Heart right ventricle (tissue), 16 donors: ENCODE measurements at regions of chr7 and their contacts with region 1.

Region 1: DNA sequence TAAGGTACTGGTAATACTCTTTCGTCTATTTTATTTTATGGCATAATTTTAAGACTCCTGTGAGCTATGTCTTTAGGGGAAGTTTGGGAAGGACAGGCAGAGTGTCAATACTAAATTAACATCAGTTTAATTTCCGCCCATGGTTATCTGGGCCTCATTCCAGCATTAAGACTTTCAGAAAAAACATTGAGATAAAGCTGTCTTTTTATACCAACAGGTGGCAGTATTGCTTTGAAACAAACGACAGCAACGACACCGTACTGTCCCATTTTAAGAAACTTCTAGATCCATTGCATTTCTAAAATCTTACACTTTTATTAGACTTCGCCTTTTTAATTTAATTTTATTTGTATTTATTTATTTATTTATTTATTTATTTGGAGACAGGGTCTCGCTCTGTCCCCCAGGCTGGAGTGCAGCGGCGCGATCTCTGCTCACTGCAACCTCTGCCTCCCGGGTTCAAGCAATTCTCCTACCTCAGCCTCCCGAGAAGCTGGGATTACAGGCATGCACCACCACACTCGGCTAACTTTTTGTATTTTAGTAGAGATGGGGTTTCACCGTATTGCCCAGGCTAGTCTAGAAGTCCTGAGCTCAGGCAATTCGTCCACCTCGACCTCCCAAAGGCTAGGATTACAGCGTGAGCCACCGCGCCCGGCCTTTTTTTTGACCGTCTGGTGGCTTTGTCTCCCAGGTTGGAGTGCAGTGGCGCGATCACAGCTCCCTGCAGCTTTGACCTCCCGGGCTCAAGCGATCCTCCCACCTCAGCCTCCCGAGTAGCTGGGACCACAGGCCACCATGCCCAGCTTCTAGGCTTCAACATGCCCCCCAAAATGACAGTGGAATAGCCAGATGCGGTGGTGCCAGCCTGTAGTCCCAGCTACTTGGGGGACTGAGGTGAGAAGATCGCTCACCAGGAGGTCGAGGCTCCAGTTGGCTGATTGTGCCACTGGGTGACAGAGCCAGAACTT is 78.7 kb upstream of the C1GALT1 start:
- DNase-seq: peak in 1 of 2 donors; percentile 6
- ATAC-seq: peak in 6 of 8 donors; percentile 43 to 79 (median 63)
- H3K4me3 ChIP-seq: peak overlapping the region in 3 of 10 donors; percentile 12 to 30 (median 18)
- H3K27ac ChIP-seq: no peak overlapping the region
- H3K4me1 ChIP-seq: peaks cover 0 to 29% (median 15%) of the 10 kb centered on the region in 9 donors
- H3K27me3 ChIP-seq: no peaks in the 10 kb centered on the region
- CTCF ChIP-seq: peak; percentile 54 to 80 (median 72)

Region 2: DNA sequence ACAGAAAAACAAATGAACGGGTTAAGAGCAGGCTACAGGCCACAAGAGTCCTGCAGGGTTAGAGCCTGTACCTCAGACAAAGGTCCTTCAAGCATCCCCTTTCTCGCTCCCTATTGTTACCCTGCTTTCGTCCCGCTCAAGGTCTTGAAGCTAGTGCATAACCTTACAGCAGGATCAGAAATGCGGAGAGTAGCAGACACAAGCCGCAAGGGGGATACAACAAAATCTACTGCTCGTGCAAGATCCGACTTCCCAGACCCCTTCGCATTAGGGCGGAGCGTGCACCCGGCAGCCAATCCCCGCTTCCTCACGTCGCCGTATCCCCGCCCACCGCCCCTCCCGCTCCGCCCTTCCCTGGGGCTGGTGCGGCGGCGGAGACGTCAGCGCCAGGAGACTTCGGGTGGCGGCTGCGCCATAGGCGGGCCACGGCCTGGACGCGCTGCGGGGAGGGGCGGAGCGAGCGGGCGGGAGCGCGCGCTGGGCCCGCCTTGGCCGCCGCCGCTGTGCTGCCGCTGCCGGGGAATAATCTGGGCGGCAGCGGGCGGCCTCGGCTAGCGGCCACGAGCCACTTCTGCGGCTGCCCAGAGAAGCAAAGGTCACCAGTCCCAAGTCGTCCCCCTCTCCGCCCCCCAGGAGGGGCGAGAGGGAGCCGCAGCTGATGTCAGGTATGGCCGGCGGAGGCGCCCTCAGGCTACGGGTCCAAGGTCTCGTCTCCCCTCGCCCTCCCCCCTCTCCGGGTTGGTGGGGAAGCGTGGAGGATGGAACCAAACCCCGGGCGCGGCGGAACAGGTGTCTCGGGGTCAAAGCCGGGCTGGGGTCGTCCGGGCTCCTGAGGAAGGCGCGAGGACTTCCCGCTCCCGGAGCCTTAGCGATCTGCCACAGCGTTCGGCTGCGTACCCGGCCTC is 78.8 kb after region 1 on chr7 and contains the start of gene C1GALT1:
- intact Hi-C with region 1: loop called in 4 of 10 experiments (anchors 5 kb)
- DNase-seq: peak; percentile 97 to 98
- ATAC-seq: peak; percentile 97 to 100 (median 98)
- H3K4me3 ChIP-seq: peak within 1 kb of the TSS; percentile 73 to 98 (median 93)
- H3K27ac ChIP-seq: peak within 1 kb of the TSS; percentile 72 to 99 (median 96)
- H3K4me1 ChIP-seq: peaks cover 0 to 39% (median 25%) of the 10 kb centered on the region in 9 donors
- H3K27me3 ChIP-seq: no peaks in the 10 kb centered on the region
- CTCF ChIP-seq: peak in 8 of 9 donors; percentile 27 to 57 (median 42)
- total RNA-seq, gene C1GALT1: 14.8 to 31.9 (median 21.5) TPM

Region 3: GRCh38 chr7:7416031-7416858 is 312.6 kb after region 1 on chr7:
- intact Hi-C with region 1: loop called in 7 of 10 experiments (anchors 10 kb)
- DNase-seq: no peak
- ATAC-seq: no peak
- H3K4me3 ChIP-seq: no peak overlapping the region
- H3K27ac ChIP-seq: no peak overlapping the region
- H3K4me1 ChIP-seq: peaks cover 0 to 9% (median 0%) of the 10 kb centered on the region in 9 donors
- H3K27me3 ChIP-seq: peaks cover 0 to 5% (median 0%) of the 10 kb centered on the region in 7 donors
- CTCF ChIP-seq: no peak

Region 4: GRCh38 chr7:7535691-7536090 is 432.1 kb after region 1 on chr7 and contains the start of gene COL28A1:
- intact Hi-C with region 1: loop called in 9 of 10 experiments (anchors 2 to 5 kb)
- DNase-seq: no peak
- ATAC-seq: no peak
- H3K4me3 ChIP-seq: peak within 1 kb of the TSS in 1 of 10 donors; percentile 22
- H3K27ac ChIP-seq: no peak within 1 kb of the TSS
- H3K4me1 ChIP-seq: no peaks in the 10 kb centered on the region
- H3K27me3 ChIP-seq: peaks cover 0 to 10% (median 0%) of the 10 kb centered on the region in 7 donors
- CTCF ChIP-seq: no peak
- total RNA-seq, gene COL28A1: 0.88 to 8.1 (median 1.5) TPM

Region 5: GRCh38 chr7:7789551-7789988 is 685.9 kb after region 1 on chr7:
- intact Hi-C with region 1: loop called in 1 of 10 experiments (anchors 5 kb)
- DNase-seq: no peak
- ATAC-seq: no peak
- H3K4me3 ChIP-seq: no peak overlapping the region
- H3K27ac ChIP-seq: no peak overlapping the region
- H3K4me1 ChIP-seq: peaks cover 0 to 8% (median 0%) of the 10 kb centered on the region in 9 donors
- H3K27me3 ChIP-seq: no peaks in the 10 kb centered on the region
- CTCF ChIP-seq: no peak